Left cardiac atrium (tissue), 4 donors: ENCODE measurements at regions of chr13 and their contacts with region 1.

Region 1: GRCh38 chr13:23888658-23889614 is at the start of gene MIPEP:
- DNase-seq: peak; percentile 96
- ATAC-seq: peak; percentile 98 to 99
- total RNA-seq, gene MIPEP: 46.0 to 64.6 TPM

Region 2: GRCh38 chr13:23466144-23467002 is 422.6 kb before region 1 on chr13:
- intact Hi-C with region 1: loop called in 1 of 2 experiments (anchors 5 kb)
- DNase-seq: peak; percentile 77
- ATAC-seq: peak; percentile 94 to 96

Region 3: GRCh38 chr13:23851106-23851505 is 37.8 kb before region 1 on chr13:
- intact Hi-C with region 1: no loop called
- DNase-seq: no peak
- ATAC-seq: no peak

Region 4: DNA sequence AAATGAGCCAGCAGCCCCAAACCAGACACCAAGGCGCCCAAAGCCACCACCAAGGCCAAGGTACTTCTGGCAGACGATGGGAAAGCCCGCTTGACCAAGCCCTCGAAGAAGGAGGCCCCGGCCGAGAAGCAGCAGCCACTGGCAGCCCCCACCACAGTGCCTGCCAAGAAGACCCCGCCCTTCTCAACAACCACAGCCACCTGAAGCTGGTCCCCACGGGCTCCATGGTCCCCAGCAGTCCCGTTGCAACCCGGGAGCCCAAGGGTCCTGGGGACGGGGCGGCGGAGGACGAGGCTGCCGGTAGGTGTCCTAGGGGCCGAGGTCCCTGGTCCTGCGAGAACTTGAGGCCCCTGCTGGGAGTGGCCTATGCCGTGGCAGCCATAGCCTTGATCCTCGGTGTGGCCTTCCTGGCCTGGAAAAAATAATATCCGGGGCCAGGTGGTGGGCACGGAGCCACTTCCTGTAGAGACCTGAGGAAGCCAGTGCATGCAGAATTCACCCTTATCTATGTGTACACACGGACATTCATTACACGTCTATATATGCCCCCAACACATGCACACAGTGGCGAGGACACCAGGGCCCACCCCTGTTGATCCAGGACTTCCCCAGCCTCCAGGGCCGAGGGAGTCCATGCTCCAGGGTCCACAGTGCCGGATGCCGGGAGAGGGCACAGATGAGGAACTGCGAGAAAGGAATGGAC is 434.3 kb after region 1 on chr13:
- intact Hi-C with region 1: loop called in 1 of 2 experiments (anchors 5 kb)
- DNase-seq: no peak
- ATAC-seq: no peak